ENCODE measurements at regions of chr2 and their contacts with region 1.

Region 1: DNA sequence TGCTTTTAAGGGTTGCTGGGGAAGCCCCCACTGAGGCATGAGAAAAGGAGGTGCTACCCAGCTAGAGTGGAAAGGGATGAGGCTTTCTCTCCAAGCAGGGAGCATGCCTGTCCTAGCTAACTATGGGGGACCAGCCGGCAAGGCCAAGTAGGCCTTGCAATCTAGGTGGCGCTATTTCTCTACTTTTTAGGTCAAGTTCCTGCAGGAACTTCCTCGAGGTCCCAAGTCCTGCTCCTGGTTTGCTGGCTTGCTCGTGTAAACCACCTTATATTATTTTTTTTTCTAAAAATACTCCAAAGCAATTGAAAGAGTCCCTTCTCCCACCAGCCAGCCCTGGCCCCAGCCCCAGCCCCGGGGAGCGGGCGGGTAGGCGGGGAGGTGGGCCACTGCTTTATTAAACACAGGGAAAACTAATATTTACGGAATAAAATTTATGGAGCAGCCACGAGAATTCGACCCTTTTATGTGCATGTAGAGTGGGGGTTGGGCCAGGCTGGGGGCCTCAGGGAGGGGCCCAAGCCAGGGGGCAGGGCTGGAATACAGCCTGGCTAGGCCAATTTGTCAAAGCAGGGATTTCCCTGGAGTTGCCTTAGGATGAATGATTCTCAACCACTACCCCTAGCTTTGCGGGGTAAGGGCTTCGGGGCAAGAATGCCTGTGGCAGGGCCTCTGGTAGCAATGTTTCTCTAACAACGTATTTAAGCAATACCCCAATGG is 12.8 kb upstream of the IHH start:
- DNase-seq: peak; percentile 66
- ATAC-seq: peak; percentile 88
- H3K4me3 Mint-ChIP-seq: no peak overlapping the region
- H3K27ac Mint-ChIP-seq: no peak overlapping the region
- H3K4me1 Mint-ChIP-seq: peaks cover 6% of the 10 kb centered on the region
- H3K27me3 Mint-ChIP-seq: no peaks in the 10 kb centered on the region
- CTCF ChIP-seq: peak; percentile 70

Region 2: DNA sequence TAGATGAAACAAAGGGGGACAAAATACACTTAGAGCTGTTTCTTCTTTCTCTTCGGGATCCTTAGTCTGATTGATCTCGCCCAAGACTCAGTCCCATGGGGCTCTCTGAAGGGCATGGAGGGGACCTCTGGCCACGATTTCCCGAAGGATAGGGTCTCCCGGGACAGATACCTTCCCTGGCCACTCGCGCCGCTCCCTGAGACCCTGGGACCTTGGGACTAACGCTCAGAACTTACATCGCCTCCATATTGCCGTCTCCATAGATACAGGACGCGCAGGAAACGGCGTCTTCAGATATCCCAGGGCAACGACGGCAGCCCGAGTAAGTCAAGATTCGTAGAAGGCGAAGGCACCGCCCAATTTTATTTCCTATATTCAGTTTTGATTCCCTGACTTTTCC is 32.3 kb before region 1 on chr2 and contains the start of gene CFAP65:
- CTCF ChIA-PET with region 1: interaction called, 19 read pairs
- POLR2A ChIA-PET with region 1: no interaction called
- DNase-seq: peak; percentile 69
- ATAC-seq: peak; percentile 91
- H3K4me3 Mint-ChIP-seq: peak within 1 kb of the TSS; percentile 86
- H3K27ac Mint-ChIP-seq: 0 out of 2 replicates have a peak within 1 kb of the TSS, but pooled peaks have one; percentile 8
- H3K4me1 Mint-ChIP-seq: peaks cover 4% of the 10 kb centered on the region; the same call in 1 of the 2 replicates
- H3K27me3 Mint-ChIP-seq: peaks cover 30% of the 10 kb centered on the region
- CTCF ChIP-seq: no peak
- total RNA-seq, gene CFAP65: 0.44 to 1.0 TPM (median 0.48 TPM) in 3 replicates

Region 3: GRCh38 chr2:219087361-219087760 is 13.8 kb after region 1 on chr2:
- CTCF ChIA-PET with region 1: interaction called, 33 read pairs
- POLR2A ChIA-PET with region 1: no interaction called
- DNase-seq: no peak
- ATAC-seq: no peak; the same call in 1 of the 2 replicates
- H3K4me3 Mint-ChIP-seq: no peak overlapping the region
- H3K27ac Mint-ChIP-seq: no peak overlapping the region
- H3K4me1 Mint-ChIP-seq: peaks cover 19% of the 10 kb centered on the region
- H3K27me3 Mint-ChIP-seq: no peaks in the 10 kb centered on the region
- CTCF ChIP-seq: no peak

Region 4: GRCh38 chr2:219125225-219125885 is 51.8 kb after region 1 on chr2:
- CTCF ChIA-PET with region 1: interaction called, 34 read pairs
- POLR2A ChIA-PET with region 1: no interaction called
- DNase-seq: no peak
- ATAC-seq: no peak
- H3K4me3 Mint-ChIP-seq: no peak overlapping the region
- H3K27ac Mint-ChIP-seq: no peak overlapping the region
- H3K4me1 Mint-ChIP-seq: peaks cover 18% of the 10 kb centered on the region
- H3K27me3 Mint-ChIP-seq: no peaks in the 10 kb centered on the region
- CTCF ChIP-seq: no peak

Region 5: GRCh38 chr2:219155054-219155644 is 81.6 kb after region 1 on chr2:
- CTCF ChIA-PET with region 1: interaction called, 23 read pairs
- POLR2A ChIA-PET with region 1: no interaction called
- DNase-seq: peak; percentile 24
- ATAC-seq: peak; percentile 40
- H3K4me3 Mint-ChIP-seq: no peak overlapping the region
- H3K27ac Mint-ChIP-seq: no peak overlapping the region
- H3K4me1 Mint-ChIP-seq: peaks cover 10% of the 10 kb centered on the region
- H3K27me3 Mint-ChIP-seq: no peaks in the 10 kb centered on the region
- CTCF ChIP-seq: peak; percentile 53

Measured in WTC11 (cell line).